Posterior vena cava (tissue), 2 donors: ENCODE measurements at regions of chr12 and their contacts with region 1.

Region 1: GRCh38 chr12:108218921-108219320 is 89.8 kb downstream of the WSCD2 start:
- DNase-seq: no peak

Region 2: GRCh38 chr12:108180255-108181094 is 38.4 kb before region 1 on chr12:
- intact Hi-C with region 1: no loop called
- DNase-seq: no peak

Region 3: GRCh38 chr12:108234158-108234557 is 15.2 kb after region 1 on chr12:
- intact Hi-C with region 1: loop called in 1 of 2 experiments (anchors 1 kb)
- DNase-seq: no peak

Region 4: GRCh38 chr12:108248011-108248410 is 29.1 kb after region 1 on chr12:
- intact Hi-C with region 1: no loop called
- DNase-seq: no peak

Region 5: DNA sequence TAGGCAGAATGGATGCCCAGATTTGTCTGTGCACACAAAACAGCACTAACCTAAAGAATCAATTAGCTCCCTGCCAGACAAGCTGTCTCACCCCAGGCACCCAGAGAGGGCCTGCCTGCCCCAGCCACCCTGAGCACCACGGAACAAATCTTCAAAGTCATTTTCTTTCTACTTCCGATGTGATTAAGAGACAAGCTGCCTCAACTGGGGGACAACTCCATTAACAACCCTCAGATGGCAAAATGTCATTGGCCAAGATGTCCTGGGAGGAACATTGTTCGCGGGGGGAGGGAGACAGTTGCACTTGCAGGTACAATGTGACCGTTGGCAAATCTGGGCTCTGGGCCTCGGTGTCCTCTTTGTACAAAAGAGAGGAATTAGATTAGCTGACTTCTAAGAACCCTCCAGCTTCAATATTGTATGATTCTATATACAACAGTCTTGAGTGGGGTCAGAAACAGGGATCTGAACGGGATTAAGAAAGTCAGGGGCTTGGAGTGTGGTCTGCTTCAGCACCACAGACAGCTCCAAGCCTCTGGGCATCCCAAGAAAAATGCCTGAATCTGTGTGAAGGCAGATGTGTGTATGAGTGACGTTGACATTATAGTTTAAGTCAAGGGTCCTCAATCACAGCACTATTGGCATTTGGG is 163.0 kb after region 1 on chr12:
- intact Hi-C with region 1: no loop called
- DNase-seq: no peak

Region 6: DNA sequence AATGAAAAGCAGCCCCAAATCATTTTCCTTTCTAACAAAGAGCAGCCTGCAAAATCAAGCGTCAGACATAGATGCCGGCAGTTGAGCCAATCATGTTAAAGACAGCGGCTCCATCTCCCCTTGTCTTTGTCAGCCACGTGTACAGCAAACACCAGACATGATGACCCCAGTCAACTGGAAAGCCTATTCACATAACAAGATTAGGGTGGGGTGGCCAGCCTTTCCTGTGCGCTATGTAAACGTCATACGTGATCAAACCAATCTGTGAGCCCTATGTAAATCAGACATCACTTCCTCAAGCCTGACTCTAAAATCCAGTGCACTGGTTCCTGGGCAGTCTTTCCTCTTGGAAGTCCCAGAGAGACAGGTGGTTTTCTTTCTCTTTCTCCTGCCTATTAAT is 286.2 kb after region 1 on chr12:
- intact Hi-C with region 1: no loop called
- DNase-seq: no peak